ENCODE measurements at regions of chr3 and their contacts with region 1.

Region 1: DNA sequence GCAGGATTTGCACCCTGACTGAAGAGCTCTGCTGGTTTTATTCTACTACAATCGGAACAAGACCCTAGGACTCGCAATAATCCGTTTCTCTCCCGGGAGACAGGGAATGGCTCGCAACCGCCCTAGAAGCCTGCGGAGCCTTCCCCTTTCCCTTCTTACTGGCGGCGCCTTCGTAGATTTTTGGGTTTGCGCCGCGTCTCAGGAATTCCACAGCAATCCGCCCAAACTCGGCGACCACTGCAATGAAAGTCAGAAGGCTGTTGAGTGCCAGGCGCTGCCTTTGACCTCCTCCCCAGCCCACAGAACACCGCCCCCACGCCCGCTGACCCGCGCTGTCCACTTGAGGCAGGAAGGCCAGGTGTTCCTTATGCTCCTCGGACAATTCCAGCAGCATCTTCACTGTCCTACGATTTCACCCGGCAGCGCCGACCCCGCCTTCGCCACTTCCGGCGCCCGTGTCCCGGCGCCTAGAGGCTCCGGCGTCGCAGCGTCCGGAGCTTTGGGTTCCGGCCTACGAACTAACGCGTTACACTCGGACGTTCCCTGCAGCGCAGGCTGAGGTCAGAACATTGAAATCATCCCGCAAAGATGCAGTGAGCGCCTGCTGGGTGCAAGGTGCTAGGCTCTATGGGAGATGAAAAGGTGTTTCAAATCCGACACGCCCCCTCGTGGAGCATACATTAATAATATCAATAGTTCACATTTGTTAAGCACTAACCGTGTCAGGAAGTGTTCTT is at the start of gene COMMD2:
- DNase-seq: peak; percentile 46 to 83 (median 58)
- ATAC-seq: peak; percentile 87 to 96 (median 94)
- H3K4me3 ChIP-seq: peak within 1 kb of the TSS; percentile 85 to 95
- H3K4me3 Mint-ChIP-seq: peak within 1 kb of the TSS; percentile 94 to 98 (median 96)
- H3K27ac ChIP-seq: peak within 1 kb of the TSS; percentile 79
- H3K27ac Mint-ChIP-seq: peak within 1 kb of the TSS; percentile 94 to 97
- H3K4me1 ChIP-seq: peaks cover 9% of the 10 kb centered on the region in 2 experiments
- H3K4me1 Mint-ChIP-seq: peaks cover 37 to 48% (median 38%) of the 10 kb centered on the region in 3 donors
- H3K27me3 ChIP-seq: no peaks in the 10 kb centered on the region
- H3K27me3 Mint-ChIP-seq: peaks cover 0 to 2% of the 10 kb centered on the region in 2 donors
- total RNA-seq, gene COMMD2: 29.5 to 36.1 (median 33.7) TPM

Region 2: GRCh38 chr3:149512209-149512782 is 239.9 kb before region 1 on chr3:
- CTCF ChIA-PET with region 1: interaction called in 1 of 2 experiments, 11 read pairs
- POLR2A ChIA-PET with region 1: no interaction called
- DNase-seq: peak in 7 of 35 experiments; percentile 3 to 48 (median 10)
- ATAC-seq: no peak
- H3K4me3 ChIP-seq: no peak overlapping the region
- H3K4me3 Mint-ChIP-seq: no peak overlapping the region
- H3K27ac ChIP-seq: no peak overlapping the region
- H3K27ac Mint-ChIP-seq: no peak overlapping the region
- H3K4me1 ChIP-seq: no peaks in the 10 kb centered on the region
- H3K4me1 Mint-ChIP-seq: peaks cover 11 to 12% (median 12%) of the 10 kb centered on the region in 3 donors
- H3K27me3 ChIP-seq: peaks cover 0 to 6% of the 10 kb centered on the region in 2 experiments
- H3K27me3 Mint-ChIP-seq: peaks cover 11 to 19% of the 10 kb centered on the region in 2 donors

Region 3: GRCh38 chr3:149771652-149772271 is 19.5 kb after region 1 on chr3:
- CTCF ChIA-PET with region 1: interaction called in 1 of 2 experiments, 11 read pairs
- POLR2A ChIA-PET with region 1: interaction called in 1 of 2 experiments, 6 read pairs
- DNase-seq: peak in 19 of 35 experiments; percentile 2 to 54 (median 15)
- ATAC-seq: peak in 1 of 4 experiments; percentile 59
- H3K4me3 ChIP-seq: no peak overlapping the region
- H3K4me3 Mint-ChIP-seq: no peak overlapping the region
- H3K27ac ChIP-seq: no peak overlapping the region
- H3K27ac Mint-ChIP-seq: no peak overlapping the region
- H3K4me1 ChIP-seq: no peaks in the 10 kb centered on the region
- H3K4me1 Mint-ChIP-seq: no peaks in the 10 kb centered on the region
- H3K27me3 ChIP-seq: peaks cover 0 to 3% of the 10 kb centered on the region in 2 experiments
- H3K27me3 Mint-ChIP-seq: peaks cover 14 to 21% of the 10 kb centered on the region in 2 donors

Region 4: GRCh38 chr3:150038830-150039229 is 286.6 kb after region 1 on chr3:
- CTCF ChIA-PET with region 1: no interaction called
- POLR2A ChIA-PET with region 1: no interaction called
- DNase-seq: no peak
- ATAC-seq: no peak
- H3K4me3 ChIP-seq: no peak overlapping the region
- H3K4me3 Mint-ChIP-seq: no peak overlapping the region
- H3K27ac ChIP-seq: no peak overlapping the region
- H3K27ac Mint-ChIP-seq: no peak overlapping the region
- H3K4me1 ChIP-seq: no peaks in the 10 kb centered on the region
- H3K4me1 Mint-ChIP-seq: no peaks in the 10 kb centered on the region
- H3K27me3 ChIP-seq: peaks cover 0 to 4% of the 10 kb centered on the region in 2 experiments
- H3K27me3 Mint-ChIP-seq: peaks cover 13 to 24% of the 10 kb centered on the region in 2 donors